Aorta (tissue), 5 donors: ENCODE measurements at regions of chr2 and their contacts with region 1.

Region 1: DNA sequence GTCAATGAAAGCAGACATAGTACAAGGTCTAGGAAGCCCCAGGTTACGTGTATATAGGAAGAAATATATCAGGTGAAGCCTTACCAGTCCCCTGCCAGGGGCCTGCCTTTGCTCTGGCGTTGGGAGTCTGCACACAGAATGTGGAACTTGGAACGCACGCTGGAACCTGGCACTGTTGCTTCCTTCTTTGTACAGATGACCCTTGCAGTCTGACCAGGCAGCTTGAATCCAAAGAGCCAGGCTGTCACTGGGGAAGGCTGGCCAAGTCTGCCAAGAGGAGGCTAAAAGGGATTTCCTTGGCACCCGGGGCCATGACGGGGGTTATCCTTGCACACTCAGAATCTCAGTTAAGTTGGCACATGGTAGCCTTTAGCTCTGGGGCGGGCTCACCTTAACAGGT is 39.5 kb downstream of the TMEM247 start:
- DNase-seq: peak in 1 of 2 donors; percentile 69
- ATAC-seq: no peak
- H3K4me3 ChIP-seq: no peak overlapping the region
- H3K27ac ChIP-seq: no peak overlapping the region
- H3K4me1 ChIP-seq: no peaks in the 10 kb centered on the region
- H3K27me3 ChIP-seq: no peaks in the 10 kb centered on the region

Region 2: GRCh38 chr2:44680983-44681531 is 1837.8 kb before region 1 on chr2:
- intact Hi-C with region 1: no loop called
- DNase-seq: no peak
- ATAC-seq: no peak
- H3K4me3 ChIP-seq: no peak overlapping the region
- H3K27ac ChIP-seq: no peak overlapping the region
- H3K4me1 ChIP-seq: no peaks in the 10 kb centered on the region
- H3K27me3 ChIP-seq: no peaks in the 10 kb centered on the region

Region 3: GRCh38 chr2:46469116-46469515 is 49.7 kb before region 1 on chr2:
- intact Hi-C with region 1: loop called in 1 of 2 experiments (anchors 5 kb)
- DNase-seq: no peak
- ATAC-seq: no peak
- H3K4me3 ChIP-seq: no peak overlapping the region
- H3K27ac ChIP-seq: no peak overlapping the region
- H3K4me1 ChIP-seq: no peaks in the 10 kb centered on the region
- H3K27me3 ChIP-seq: no peaks in the 10 kb centered on the region

Region 4: DNA sequence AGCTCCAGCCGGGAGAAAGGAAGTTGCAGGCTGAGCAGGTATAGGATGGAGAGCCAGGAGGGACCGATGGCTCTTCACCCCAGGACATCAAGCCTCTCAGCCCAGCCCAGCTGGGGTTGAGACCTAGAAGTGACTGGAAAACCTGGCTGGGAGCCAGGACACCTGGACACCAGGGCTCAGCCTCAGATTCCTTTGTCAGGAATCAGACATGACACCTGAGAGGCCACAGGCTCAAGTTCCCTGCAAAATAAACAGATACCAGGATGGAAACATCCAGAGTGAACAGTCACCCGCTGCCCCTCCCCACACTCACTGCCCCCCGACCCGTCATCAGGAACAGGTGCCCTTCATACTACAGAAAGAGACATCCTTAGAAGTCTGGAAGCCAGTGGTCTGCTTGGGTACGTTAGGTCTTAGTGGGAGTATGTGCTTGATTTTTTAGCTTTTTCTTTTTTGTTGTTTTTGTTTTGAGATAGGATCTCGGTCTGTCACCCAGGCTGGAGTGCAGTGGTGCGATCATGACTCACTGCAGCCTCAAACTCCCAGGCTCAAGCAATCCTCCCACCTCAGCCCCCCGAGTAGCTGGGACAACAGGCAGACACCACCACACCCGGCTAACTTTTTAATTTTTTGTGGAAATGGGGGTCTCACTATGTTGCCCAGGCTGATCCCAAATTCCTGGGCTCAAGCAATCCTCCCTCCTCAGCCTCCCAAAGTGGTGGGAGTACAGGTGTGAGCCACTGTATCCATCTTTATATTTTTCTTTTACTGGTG is 732.0 kb after region 1 on chr2:
- intact Hi-C with region 1: no loop called
- DNase-seq: no peak
- ATAC-seq: no peak
- H3K4me3 ChIP-seq: no peak overlapping the region
- H3K27ac ChIP-seq: no peak overlapping the region
- H3K4me1 ChIP-seq: no peaks in the 10 kb centered on the region
- H3K27me3 ChIP-seq: no peaks in the 10 kb centered on the region